GM10248 (cell line): ENCODE measurements at regions of chr13 and their contacts with region 1.

Region 1: GRCh38 chr13:26929971-26930730 is 169.6 kb upstream of the GPR12 start:
- DNase-seq: peak; percentile 79
- CTCF ChIP-seq: peak; percentile 91

Region 2: GRCh38 chr13:26727633-26728032 is 202.5 kb before region 1 on chr13:
- CTCF ChIA-PET with region 1: no interaction called
- POLR2A ChIA-PET with region 1: no interaction called
- DNase-seq: no peak
- CTCF ChIP-seq: no peak

Region 3: GRCh38 chr13:26914624-26915023 is 15.5 kb before region 1 on chr13:
- CTCF ChIA-PET with region 1: interaction called, 34 read pairs
- POLR2A ChIA-PET with region 1: no interaction called
- DNase-seq: no peak
- CTCF ChIP-seq: no peak

Region 4: GRCh38 chr13:26941345-26942174 is 11.4 kb after region 1 on chr13:
- CTCF ChIA-PET with region 1: interaction called, 13 read pairs
- POLR2A ChIA-PET with region 1: no interaction called
- DNase-seq: no peak
- CTCF ChIP-seq: no peak